Gastrocnemius medialis (tissue), 4 donors: ENCODE measurements at regions of chr4 and their contacts with region 1.

Region 1: GRCh38 chr4:7719354-7720174 is 220.1 kb downstream of the AFAP1 start:
- DNase-seq: no peak
- ATAC-seq: no peak
- H3K4me3 ChIP-seq: no peak overlapping the region
- H3K27ac ChIP-seq: no peak overlapping the region
- H3K4me1 ChIP-seq: no peaks in the 10 kb centered on the region
- H3K27me3 ChIP-seq: peaks cover 0 to 7% (median 0%) of the 10 kb centered on the region in 3 donors
- CTCF ChIP-seq: peak; percentile 15 to 77 (median 63)
- POLR2A ChIP-seq: no peak

Region 2: GRCh38 chr4:7186061-7186461 is 533.5 kb before region 1 on chr4:
- in situ Hi-C with region 1: loop called in 3 of 4 experiments (anchors 10 to 25 kb)
- intact Hi-C with region 1: no loop called
- DNase-seq: no peak
- ATAC-seq: no peak
- H3K4me3 ChIP-seq: no peak overlapping the region
- H3K27ac ChIP-seq: no peak overlapping the region
- H3K4me1 ChIP-seq: no peaks in the 10 kb centered on the region
- H3K27me3 ChIP-seq: peaks cover 0 to 26% (median 3%) of the 10 kb centered on the region in 3 donors
- CTCF ChIP-seq: no peak
- POLR2A ChIP-seq: no peak

Region 3: DNA sequence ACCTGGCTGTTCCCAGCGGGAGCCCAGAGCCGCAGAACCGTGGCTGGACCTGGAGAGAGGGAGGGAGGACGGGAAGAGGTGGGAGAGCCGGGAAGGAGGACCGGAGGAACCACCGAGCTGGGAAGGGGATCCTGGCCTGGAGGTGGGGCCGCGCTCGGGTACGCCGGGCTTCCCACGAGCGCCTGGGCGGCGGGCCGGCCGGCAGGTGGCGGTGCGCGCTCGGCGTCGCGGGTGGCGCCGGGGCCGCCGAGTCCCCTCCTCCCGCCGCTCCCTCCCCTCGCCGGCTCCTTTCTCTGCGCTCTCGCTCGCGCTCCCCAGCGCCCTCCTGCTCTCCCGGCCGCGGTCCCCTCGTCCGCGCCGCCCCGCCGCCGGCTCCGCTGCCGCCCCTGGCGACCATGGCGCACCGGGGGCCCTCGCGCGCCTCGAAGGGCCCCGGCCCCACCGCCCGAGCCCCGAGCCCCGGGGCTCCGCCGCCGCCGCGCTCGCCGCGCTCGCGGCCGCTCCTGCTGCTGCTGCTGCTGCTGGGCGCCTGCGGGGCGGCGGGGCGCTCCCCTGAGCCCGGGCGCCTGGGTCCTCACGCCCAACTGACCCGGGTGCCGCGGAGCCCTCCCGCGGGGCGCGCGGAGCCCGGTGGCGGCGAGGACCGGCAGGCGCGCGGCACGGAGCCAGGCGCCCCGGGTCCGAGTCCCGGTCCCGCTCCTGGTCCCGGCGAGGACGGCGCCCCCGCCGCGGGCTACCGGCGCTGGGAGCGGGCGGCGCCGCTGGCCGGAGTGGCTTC is 527.1 kb before region 1 on chr4 and contains the start of gene SORCS2:
- in situ Hi-C with region 1: loop called in 3 of 4 experiments (anchors 10 to 25 kb)
- intact Hi-C with region 1: loop called (anchors 2 kb)
- DNase-seq: peak; percentile 22 to 41
- ATAC-seq: peak; percentile 91 to 92
- H3K4me3 ChIP-seq: peak within 1 kb of the TSS; percentile 27 to 44 (median 37)
- H3K27ac ChIP-seq: no peak within 1 kb of the TSS
- H3K4me1 ChIP-seq: peaks cover 6 to 7% of the 10 kb centered on the region in 2 donors
- H3K27me3 ChIP-seq: peaks cover 17 to 46% (median 26%) of the 10 kb centered on the region in 3 donors
- CTCF ChIP-seq: peak; percentile 49 to 93 (median 90)
- POLR2A ChIP-seq: no peak
- total RNA-seq, gene SORCS2: 0.07 to 1.2 (median 0.11) TPM

Region 4: DNA sequence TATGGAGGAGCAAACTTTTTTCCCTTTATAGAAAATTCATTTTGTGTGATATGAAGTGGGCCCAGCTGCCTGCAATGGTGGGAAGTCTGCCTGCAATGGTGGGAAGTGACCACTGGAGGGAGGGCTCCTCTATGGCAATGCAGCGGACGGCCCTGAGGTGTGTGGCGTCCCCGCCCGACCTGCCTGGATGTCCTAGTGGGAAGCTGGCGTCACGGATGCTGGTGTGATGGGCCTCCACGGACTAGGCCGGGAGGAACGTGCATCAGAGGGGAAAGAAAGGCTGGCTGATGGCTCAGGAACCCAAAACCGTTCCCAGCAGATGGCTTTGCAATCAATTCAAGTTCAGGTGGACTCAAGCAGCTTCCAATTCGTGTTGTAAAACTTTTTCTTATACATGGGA is 42.2 kb after region 1 on chr4:
- in situ Hi-C with region 1: no loop called
- intact Hi-C with region 1: no loop called
- DNase-seq: peak; percentile 52 to 70
- ATAC-seq: peak; percentile 48 to 68
- H3K4me3 ChIP-seq: no peak overlapping the region
- H3K27ac ChIP-seq: no peak overlapping the region
- H3K4me1 ChIP-seq: peaks cover 18% of the 10 kb centered on the region in 2 donors
- H3K27me3 ChIP-seq: no peaks in the 10 kb centered on the region
- CTCF ChIP-seq: peak; percentile 67 to 79 (median 78)
- POLR2A ChIP-seq: no peak

Region 5: DNA sequence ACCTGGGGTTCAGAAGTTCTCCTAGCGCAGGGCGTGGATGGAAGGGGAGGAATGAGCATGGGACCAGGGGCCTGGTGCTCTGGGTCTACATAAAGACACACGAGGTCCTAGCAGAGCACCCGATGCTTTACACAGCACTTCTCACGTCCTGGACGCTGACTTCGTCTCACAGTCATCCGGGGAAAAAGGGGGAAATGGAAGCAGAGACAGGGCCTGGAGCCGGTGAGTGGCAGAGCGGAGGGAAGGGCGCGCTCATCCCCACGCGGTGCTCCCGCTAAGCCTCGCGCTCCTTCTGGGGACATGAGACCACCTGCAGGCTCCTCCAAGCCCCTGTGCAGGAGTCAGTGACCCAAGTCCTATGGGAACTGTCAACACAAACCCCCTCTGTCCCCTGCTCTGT is 62.4 kb after region 1 on chr4:
- in situ Hi-C with region 1: no loop called
- intact Hi-C with region 1: loop called (anchors 2 kb)
- DNase-seq: no peak
- ATAC-seq: no peak
- H3K4me3 ChIP-seq: no peak overlapping the region
- H3K27ac ChIP-seq: no peak overlapping the region
- H3K4me1 ChIP-seq: peaks cover 5% of the 10 kb centered on the region in 2 donors
- H3K27me3 ChIP-seq: no peaks in the 10 kb centered on the region
- CTCF ChIP-seq: no peak
- POLR2A ChIP-seq: no peak